Adrenal gland (tissue), 19 donors: ENCODE measurements at regions of chr2 and their contacts with region 1.

Region 1: GRCh38 chr2:70616168-70616694 is 62.6 kb upstream of the TGFA start:
- DNase-seq: no peak
- H3K4me3 ChIP-seq: no peak overlapping the region
- H3K27ac ChIP-seq: no peak overlapping the region
- H3K4me1 ChIP-seq: no peaks in the 10 kb centered on the region
- H3K27me3 ChIP-seq: peaks cover 4% of the 10 kb centered on the region
- CTCF ChIP-seq: no peak
- POLR2A ChIP-seq: no peak

Region 2: DNA sequence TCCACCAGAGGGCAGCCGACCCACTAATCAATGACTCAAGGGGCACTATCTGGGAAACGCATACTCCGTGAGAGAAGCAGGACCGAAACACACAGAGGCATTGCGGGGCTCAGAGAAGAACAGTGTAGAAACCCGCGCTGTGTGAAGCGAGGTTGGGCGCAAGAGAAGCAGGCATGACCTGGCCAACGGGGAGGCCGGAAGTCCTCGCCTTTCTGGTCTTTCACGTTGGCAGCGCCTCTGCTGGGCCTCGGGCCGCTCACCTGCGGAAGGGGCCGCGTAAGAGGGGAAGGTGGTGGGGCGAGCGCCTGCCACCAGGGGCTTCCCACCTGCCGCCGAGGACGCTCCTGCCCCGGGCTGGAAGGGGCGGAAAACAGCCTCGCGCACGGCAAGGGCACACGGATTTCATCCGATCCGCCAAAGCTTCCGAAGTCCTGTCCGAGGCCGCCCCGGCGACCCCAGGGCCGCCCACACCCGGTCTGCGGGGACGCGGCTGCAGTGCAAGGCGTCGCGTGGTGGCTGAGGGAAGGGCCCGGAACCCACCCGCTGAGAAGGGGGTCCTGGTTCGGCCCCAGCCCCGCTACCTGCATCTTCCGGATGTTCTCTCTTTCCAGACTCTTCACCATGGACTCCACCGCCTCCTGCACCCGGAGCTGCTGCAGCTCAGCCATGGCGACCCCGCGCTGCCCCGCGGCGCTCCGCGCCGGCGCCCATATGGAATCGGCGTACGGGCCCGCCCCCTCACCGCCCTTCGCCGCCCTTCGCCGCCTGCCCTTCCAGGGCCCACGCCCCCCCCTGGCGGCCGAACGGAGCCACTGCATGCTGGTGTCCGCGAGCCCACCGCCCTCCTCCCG is 314.7 kb before region 1 on chr2 and contains the start of gene FAM136A:
- intact Hi-C with region 1: loop called in 1 of 2 experiments (anchors 10 kb)
- DNase-seq: peak; percentile 81 to 91 (median 87)
- H3K4me3 ChIP-seq: peak within 1 kb of the TSS in 3 of 4 donors; percentile 58 to 95 (median 84)
- H3K27ac ChIP-seq: peak within 1 kb of the TSS in 4 of 5 donors; percentile 60 to 89 (median 77)
- H3K4me1 ChIP-seq: peaks cover 5 to 6% of the 10 kb centered on the region in 2 donors
- H3K27me3 ChIP-seq: no peaks in the 10 kb centered on the region
- CTCF ChIP-seq: peak; percentile 67 to 97 (median 90)
- POLR2A ChIP-seq: peak in 1 of 2 donors; percentile 49
- total RNA-seq, gene FAM136A: 12.0 to 46.2 (median 23.2) TPM

Region 3: DNA sequence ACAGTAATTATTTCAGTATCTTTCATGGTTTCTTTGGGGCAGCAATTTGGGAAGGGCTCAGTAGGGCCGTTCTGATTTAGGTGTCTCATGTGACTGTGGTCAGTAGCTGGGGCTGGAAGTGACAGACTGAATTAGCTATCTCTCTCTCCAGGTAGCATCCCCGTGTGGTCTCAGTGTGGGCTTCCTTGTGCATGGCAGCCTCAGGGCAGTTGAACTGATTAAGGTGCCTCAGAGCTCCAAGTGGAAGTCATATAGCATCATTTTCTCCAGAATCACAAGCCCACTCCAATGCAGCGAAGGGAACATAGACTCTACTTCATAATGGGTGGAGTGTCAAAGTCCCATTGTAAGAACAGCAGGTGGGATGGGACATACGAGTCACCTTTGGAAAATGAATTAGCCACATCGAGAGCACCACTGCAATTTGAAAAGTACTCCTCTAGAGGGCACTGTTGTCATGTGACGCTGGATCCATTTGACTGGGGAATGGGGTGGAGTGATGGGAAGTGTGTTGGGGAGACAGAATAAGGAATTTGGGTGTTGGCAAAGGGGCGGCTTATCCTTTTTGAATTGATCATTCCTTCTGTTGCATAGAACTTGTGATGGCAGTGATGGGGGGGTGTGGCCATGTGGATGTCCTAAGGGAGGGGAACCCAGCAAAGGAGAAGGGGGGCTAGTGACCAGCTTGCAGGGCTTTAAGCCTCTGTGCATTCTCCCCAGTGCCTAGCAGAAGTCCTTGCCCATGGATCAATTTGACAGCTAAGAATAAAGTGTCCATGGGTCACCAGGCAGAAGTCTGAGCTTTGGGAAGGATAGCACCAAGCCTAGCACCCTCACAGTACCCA is 275.1 kb before region 1 on chr2:
- intact Hi-C with region 1: loop called (anchors 2 to 10 kb)
- DNase-seq: peak in 6 of 7 donors; percentile 19 to 52 (median 34)
- H3K4me3 ChIP-seq: no peak overlapping the region
- H3K27ac ChIP-seq: no peak overlapping the region
- H3K4me1 ChIP-seq: no peaks in the 10 kb centered on the region
- H3K27me3 ChIP-seq: no peaks in the 10 kb centered on the region
- CTCF ChIP-seq: peak; percentile 69 to 91 (median 79)
- POLR2A ChIP-seq: no peak

Region 4: GRCh38 chr2:70357684-70358071 is 258.6 kb before region 1 on chr2:
- intact Hi-C with region 1: no loop called
- DNase-seq: peak in 2 of 7 donors; percentile 11 to 51
- H3K4me3 ChIP-seq: no peak overlapping the region
- H3K27ac ChIP-seq: no peak overlapping the region
- H3K4me1 ChIP-seq: peaks cover 0 to 5% of the 10 kb centered on the region in 2 donors
- H3K27me3 ChIP-seq: no peaks in the 10 kb centered on the region
- CTCF ChIP-seq: no peak
- POLR2A ChIP-seq: no peak

Region 5: DNA sequence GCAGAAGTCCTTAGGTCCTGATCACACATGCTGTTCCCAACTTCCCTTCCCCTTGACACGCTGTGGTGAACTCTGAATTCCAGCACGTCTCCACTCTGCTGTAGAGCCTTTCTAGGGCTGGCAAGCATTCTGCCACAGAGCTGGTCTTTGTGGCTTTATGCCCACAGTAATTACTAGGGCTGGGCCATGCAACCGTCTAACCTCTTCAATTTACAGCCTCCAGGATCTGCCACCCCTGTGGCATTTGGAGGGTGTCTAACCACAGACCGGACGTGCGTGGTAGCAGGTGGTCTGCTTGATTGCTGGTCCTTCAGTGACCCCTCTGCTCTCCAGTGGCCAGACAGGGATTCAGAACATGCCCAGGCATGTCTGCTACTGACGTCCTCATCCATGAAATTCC is 19.5 kb before region 1 on chr2:
- intact Hi-C with region 1: no loop called
- DNase-seq: no peak
- H3K4me3 ChIP-seq: no peak overlapping the region
- H3K27ac ChIP-seq: no peak overlapping the region
- H3K4me1 ChIP-seq: no peaks in the 10 kb centered on the region
- H3K27me3 ChIP-seq: no peaks in the 10 kb centered on the region
- CTCF ChIP-seq: no peak
- POLR2A ChIP-seq: no peak